GM12878 (cell line): ENCODE measurements at regions of chr6 and their contacts with region 1.

Region 1: GRCh38 chr6:97120511-97120910 is 162.5 kb downstream of the MMS22L start:
- DNase-seq: no peak
- ATAC-seq: no peak
- H3K4me3 ChIP-seq: no peak overlapping the region
- H3K27ac ChIP-seq: no peak overlapping the region
- H3K4me1 ChIP-seq: no peaks in the 10 kb centered on the region
- H3K27me3 ChIP-seq: peaks cover 0 to 1% of the 10 kb centered on the region in 2 experiments; a peak in 2 of 4 replicates
- CTCF ChIP-seq: no peak
- EP300 ChIP-seq: no peak
- POLR2A ChIP-seq: no peak
- RAD21 ChIP-seq: no peak

Region 2: GRCh38 chr6:97145691-97146090 is 25.2 kb after region 1 on chr6:
- CTCF ChIA-PET with region 1: no interaction called
- POLR2A ChIA-PET with region 1: interaction called, 13 read pairs
- RAD21 ChIA-PET with region 1: no interaction called
- SMC1A ChIA-PET with region 1: interaction called, 4 read pairs
- in situ Hi-C with region 1: no loop called
- intact Hi-C with region 1: no loop called
- DNase-seq: no peak
- ATAC-seq: no peak
- H3K4me3 ChIP-seq: no peak overlapping the region
- H3K27ac ChIP-seq: no peak overlapping the region
- H3K4me1 ChIP-seq: no peaks in the 10 kb centered on the region
- H3K27me3 ChIP-seq: no peaks in the 10 kb centered on the region
- CTCF ChIP-seq: no peak
- EP300 ChIP-seq: no peak
- POLR2A ChIP-seq: no peak
- RAD21 ChIP-seq: no peak